ENCODE measurements at regions of chr2 and their contacts with region 1.

Region 1: GRCh38 chr2:85327822-85328617 is at the start of gene TGOLN2:
- DNase-seq: peak; percentile 88 to 97 (median 94)
- ATAC-seq: peak; percentile 85
- H3K4me3 ChIP-seq: peak within 1 kb of the TSS; percentile 84 to 96
- H3K4me3 Mint-ChIP-seq: peak within 1 kb of the TSS; percentile 95
- H3K27ac ChIP-seq: peak within 1 kb of the TSS; percentile 97
- H3K27ac Mint-ChIP-seq: peak within 1 kb of the TSS; percentile 99
- H3K4me1 ChIP-seq: peaks cover 37% of the 10 kb centered on the region
- H3K4me1 Mint-ChIP-seq: peaks cover 45% of the 10 kb centered on the region
- H3K27me3 ChIP-seq: no peaks in the 10 kb centered on the region
- H3K27me3 Mint-ChIP-seq: no peaks in the 10 kb centered on the region
- CTCF ChIP-seq: no peak
- total RNA-seq, gene TGOLN2: 127 to 128 TPM

Region 2: DNA sequence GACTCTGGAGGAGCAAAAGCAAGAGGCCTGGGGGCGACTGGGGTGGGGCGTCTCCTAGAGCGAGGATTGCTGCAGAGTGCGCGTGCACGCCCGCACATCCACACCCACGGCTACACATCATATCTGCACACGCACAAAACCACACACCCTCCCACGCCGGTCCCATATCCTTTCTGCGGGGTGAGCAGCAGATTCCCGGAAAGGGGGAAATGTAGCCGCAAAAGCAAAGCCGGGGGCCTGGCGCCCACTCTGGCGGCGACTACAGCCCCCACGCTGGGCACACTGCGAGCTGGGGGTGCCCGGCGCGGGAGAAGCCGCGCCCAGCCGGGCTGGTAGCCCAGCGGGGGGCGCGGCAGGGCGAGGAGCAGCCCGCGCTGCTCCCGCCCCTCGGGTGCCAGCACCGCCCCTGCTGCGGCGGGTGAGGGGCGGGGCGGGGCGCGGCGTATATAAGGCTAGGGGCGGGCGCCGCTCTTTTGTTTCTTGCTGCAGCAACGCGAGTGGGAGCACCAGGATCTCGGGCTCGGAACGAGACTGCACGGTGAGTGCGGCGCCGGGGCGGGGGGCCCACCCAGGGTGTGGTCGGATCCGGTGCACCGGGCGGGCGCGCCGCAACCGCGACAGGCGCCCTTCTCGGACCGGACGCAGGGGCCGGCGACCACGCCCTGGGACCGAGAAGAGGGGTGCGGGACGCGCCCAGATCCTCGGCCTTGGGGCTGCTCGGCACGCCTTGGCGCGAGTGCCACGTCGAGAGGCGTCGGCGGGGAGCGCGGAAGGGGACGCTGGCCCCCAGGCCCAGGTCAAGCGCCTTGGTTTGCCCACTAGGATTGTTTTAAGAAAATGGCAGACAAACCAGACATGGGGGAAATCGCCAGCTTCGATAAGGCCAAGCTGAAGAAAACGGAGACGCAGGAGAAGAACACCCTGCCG is 422.6 kb before region 1 on chr2 and contains the start of gene TMSB10:
- CTCF ChIA-PET with region 1: no interaction called
- POLR2A ChIA-PET with region 1: interaction called, 4 read pairs
- intact Hi-C with region 1: loop called in 1 of 2 experiments (anchors 1 kb)
- DNase-seq: peak; percentile 84 to 97 (median 91)
- ATAC-seq: peak; percentile 80
- H3K4me3 ChIP-seq: peak within 1 kb of the TSS; percentile 85 to 91
- H3K4me3 Mint-ChIP-seq: peak within 1 kb of the TSS; percentile 92
- H3K27ac ChIP-seq: peak within 1 kb of the TSS; percentile 68 to 80
- H3K27ac Mint-ChIP-seq: peak within 1 kb of the TSS; percentile 90
- H3K4me1 ChIP-seq: peaks cover 39% of the 10 kb centered on the region
- H3K4me1 Mint-ChIP-seq: peaks cover 59% of the 10 kb centered on the region
- H3K27me3 ChIP-seq: no peaks in the 10 kb centered on the region
- H3K27me3 Mint-ChIP-seq: no peaks in the 10 kb centered on the region
- CTCF ChIP-seq: no peak
- total RNA-seq, gene TMSB10: 1,479 to 1,577 TPM

Region 3: DNA sequence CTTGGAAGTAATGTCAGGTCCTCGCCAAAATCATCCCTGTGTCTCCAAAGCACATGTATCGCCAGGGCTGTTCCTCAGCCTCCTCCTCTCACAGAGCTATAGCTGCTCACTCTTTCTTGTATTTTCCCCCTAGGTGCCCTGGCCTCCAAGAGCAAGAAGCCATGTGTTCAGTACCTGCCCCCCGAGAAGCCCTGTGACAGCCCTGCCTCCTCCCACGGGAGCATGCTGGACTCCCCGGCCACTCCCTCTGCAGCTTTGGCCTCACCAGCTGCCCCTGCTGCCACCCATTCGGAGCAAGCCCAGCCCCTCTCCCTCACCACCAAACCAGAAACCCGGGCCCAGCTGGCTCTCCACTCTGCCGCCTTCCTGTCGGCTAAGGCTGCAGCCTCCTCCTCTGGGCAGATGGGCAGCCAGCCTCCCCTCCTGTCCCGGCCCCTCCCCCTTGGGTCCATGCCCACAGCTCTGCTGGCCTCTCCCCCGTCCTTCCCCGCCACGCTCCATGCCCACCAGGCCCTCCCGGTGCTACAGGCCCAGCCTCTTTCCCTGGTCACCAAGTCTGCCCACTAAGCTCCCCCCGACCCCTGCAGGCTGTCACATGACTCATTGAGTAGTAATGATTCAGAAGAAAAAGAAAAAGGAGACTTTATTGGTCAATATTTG is 19.0 kb before region 1 on chr2:
- CTCF ChIA-PET with region 1: interaction called, 9 read pairs
- POLR2A ChIA-PET with region 1: interaction called, 54 read pairs
- intact Hi-C with region 1: loop called in 1 of 2 experiments (anchors 1 kb)
- DNase-seq: peak in 1 of 9 experiments; percentile 24
- ATAC-seq: peak; percentile 20
- H3K4me3 ChIP-seq: peak overlapping the region; percentile 24 to 48
- H3K4me3 Mint-ChIP-seq: peak overlapping the region; percentile 89
- H3K27ac ChIP-seq: peak overlapping the region; percentile 38 to 65
- H3K27ac Mint-ChIP-seq: peak overlapping the region; percentile 97
- H3K4me1 ChIP-seq: peaks cover 32% of the 10 kb centered on the region
- H3K4me1 Mint-ChIP-seq: peaks cover 46% of the 10 kb centered on the region
- H3K27me3 ChIP-seq: no peaks in the 10 kb centered on the region
- H3K27me3 Mint-ChIP-seq: no peaks in the 10 kb centered on the region
- CTCF ChIP-seq: no peak

Region 4: DNA sequence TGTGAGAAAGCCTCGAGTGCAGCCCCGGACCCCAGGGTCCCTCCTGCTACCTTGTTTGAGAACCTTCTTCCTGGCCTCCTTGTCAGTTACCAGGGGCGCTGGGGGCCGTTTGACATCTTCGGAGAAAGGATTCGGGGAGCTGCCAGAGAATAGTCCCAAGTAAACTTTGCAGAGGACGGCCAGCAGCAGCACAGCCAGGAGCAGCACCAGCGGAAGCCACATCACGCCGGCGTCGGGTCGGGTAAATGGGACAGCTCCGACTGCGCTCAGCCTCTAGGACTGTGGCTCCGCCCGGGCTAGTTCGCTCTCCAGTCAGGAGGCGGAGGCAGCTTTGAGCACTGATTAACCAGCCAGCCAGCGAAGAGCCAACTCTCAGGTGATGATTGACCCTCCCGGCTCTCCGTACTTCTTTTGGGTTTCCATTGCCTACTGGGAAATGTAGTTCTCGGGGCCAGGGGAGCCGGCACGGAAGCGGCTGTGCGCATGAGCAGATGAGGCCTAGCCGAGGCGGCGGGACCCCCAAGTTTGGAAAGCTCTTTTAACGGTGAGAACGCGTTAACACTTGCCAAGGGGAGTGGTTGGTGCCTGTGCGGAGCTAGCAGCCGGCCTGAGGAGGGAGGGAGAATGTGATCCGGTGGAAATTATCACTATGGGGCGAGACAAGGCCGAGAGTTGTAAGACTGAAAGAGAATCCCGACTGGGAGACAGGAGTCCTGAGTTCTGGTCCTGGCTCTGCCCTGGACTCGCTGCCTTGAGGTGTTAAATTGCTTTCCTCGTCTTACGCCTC is 26.5 kb after region 1 on chr2 and contains the starts of genes ELMOD3 and RETSAT:
- CTCF ChIA-PET with region 1: interaction called, 9 read pairs
- POLR2A ChIA-PET with region 1: interaction called, 108 read pairs
- intact Hi-C with region 1: loop called (anchors 1 kb)
- DNase-seq: peak; percentile 92 to 99 (median 95)
- ATAC-seq: peak; percentile 98
- H3K4me3 ChIP-seq: peak within 1 kb of the TSS; percentile 85 to 94
- H3K4me3 Mint-ChIP-seq: peak within 1 kb of the TSS; percentile 100
- H3K27ac ChIP-seq: peak within 1 kb of the TSS; percentile 82 to 92
- H3K27ac Mint-ChIP-seq: peak within 1 kb of the TSS; percentile 100
- H3K4me1 ChIP-seq: peaks cover 31% of the 10 kb centered on the region
- H3K4me1 Mint-ChIP-seq: peaks cover 51% of the 10 kb centered on the region
- H3K27me3 ChIP-seq: no peaks in the 10 kb centered on the region
- H3K27me3 Mint-ChIP-seq: no peaks in the 10 kb centered on the region
- CTCF ChIP-seq: no peak
- total RNA-seq, gene ELMOD3: 10.8 to 12.1 TPM
- total RNA-seq, gene RETSAT: 19.0 to 19.6 TPM

Region 5: DNA sequence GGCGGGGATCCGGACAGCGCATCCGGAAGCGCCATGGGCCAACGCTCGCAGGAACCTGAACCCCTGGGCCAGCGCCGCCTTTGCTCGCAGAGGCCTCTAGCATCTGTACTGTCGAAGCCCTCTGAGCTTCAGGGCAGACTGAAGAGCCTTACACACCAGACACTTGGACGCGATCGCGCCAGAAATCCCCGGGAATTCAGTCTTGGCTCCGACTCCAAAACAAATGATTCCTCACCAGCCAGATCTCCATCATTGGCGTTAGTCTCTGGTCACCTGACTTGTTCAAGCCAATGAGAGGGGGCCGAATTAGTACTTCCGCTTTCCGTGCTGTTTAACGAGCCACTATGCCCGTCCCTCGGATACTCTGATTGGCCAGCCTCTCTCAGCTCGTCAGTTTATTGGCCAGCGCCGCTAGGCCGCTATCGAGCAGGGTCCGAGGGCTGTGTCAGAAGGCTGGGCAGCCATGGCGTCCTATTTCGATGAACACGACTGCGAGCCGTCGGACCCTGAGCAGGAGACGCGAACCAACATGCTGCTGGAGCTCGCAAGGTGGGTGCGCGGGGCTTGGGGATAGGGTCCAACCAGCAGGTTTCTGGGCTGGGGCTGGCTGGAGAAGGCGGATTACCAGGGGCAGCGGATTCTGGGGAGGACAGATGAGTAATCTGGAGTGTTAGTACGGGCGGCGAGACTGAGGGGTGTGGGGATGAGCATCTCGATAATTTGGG is 267.4 kb after region 1 on chr2 and contains the start of gene RNF181:
- CTCF ChIA-PET with region 1: no interaction called
- POLR2A ChIA-PET with region 1: interaction called, 11 read pairs
- intact Hi-C with region 1: loop called in 1 of 2 experiments (anchors 5 kb)
- DNase-seq: peak; percentile 72 to 97 (median 89)
- ATAC-seq: peak; percentile 98
- H3K4me3 ChIP-seq: peak within 1 kb of the TSS; percentile 75 to 78
- H3K4me3 Mint-ChIP-seq: peak within 1 kb of the TSS; percentile 97
- H3K27ac ChIP-seq: peak within 1 kb of the TSS; percentile 73 to 77
- H3K27ac Mint-ChIP-seq: peak within 1 kb of the TSS; percentile 97
- H3K4me1 ChIP-seq: peaks cover 25% of the 10 kb centered on the region
- H3K4me1 Mint-ChIP-seq: peaks cover 35% of the 10 kb centered on the region
- H3K27me3 ChIP-seq: no peaks in the 10 kb centered on the region
- H3K27me3 Mint-ChIP-seq: no peaks in the 10 kb centered on the region
- CTCF ChIP-seq: no peak
- total RNA-seq, gene RNF181: 38.1 to 41.0 TPM